ENCODE measurements at regions of chr20 and their contacts with region 1.

Region 1: DNA sequence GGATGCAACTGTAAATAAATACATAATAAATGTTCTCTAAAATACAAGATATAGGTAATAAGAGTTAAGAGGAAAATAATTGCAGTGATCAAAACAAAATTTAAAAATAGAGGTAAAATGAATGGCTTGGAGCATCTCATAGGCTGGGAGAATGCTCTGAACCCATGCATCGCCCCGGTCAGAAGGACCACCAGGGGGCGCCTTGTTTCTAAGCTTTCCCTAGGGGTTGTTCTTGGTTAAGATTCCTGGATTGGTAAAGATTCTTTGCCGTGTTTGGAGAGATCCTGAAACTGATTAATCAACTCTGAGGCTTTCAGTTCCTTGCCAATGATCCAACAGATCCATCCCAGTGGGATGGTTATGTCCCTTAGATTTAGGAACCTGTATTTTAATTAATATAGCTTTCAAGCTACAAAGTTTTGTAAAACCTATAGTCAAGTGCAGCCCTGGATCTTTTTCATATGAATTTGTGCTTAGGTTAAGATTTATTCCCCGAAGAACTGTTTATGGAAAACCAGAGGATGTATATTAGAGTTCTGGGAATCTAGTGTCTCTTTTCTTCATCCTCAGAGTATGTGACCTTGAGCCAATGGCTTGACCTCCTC is 45.3 kb upstream of the PRELID3B start:
- H3K4me3 ChIP-seq: no peak overlapping the region
- H3K27ac ChIP-seq: no peak overlapping the region
- H3K4me1 ChIP-seq: no peaks in the 10 kb centered on the region
- CTCF ChIP-seq: peak; percentile 32; the same call in 1 of the 2 replicates

Region 2: GRCh38 chr20:59071216-59071615 is 16.7 kb before region 1 on chr20:
- CTCF ChIA-PET with region 1: interaction called, 14 read pairs
- POLR2A ChIA-PET with region 1: no interaction called
- H3K4me3 ChIP-seq: no peak overlapping the region
- H3K27ac ChIP-seq: no peak overlapping the region
- H3K4me1 ChIP-seq: no peaks in the 10 kb centered on the region
- CTCF ChIP-seq: no peak

Region 3: GRCh38 chr20:59102841-59103299 is 14.9 kb after region 1 on chr20:
- CTCF ChIA-PET with region 1: interaction called, 20 read pairs
- POLR2A ChIA-PET with region 1: no interaction called
- H3K4me3 ChIP-seq: no peak overlapping the region
- H3K27ac ChIP-seq: no peak overlapping the region
- H3K4me1 ChIP-seq: no peaks in the 10 kb centered on the region
- CTCF ChIP-seq: no peak

Region 4: DNA sequence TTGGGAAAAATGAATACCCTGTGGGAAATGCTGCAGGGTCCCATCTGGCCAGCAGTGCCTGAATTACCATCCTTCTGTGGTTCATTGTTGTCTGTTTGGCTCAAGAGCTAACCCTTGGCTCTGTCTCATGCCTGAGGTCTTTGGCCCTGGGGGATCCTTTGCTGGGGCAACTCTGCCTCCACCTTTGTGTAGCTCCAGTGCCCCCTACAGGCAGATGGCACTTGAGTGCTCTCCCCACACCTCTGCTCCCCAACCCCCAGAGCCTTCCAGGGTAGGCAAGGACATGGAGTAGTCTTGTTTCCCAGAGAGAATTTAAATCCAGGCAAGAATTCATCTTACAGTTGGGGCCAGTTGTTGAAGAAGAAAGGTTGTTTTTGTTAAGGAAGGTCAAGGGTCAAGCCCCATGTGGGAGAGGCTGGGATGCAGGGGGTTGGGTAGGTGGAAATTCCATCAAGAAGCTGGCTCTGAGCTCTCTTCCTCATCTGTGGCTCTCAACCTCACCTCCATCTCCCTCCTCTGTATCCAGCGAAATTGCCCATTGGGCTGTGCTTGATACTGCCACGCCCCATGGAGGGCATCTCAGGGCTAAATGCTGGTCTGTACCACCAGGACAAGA is 119.9 kb after region 1 on chr20:
- CTCF ChIA-PET with region 1: interaction called, 29 read pairs
- POLR2A ChIA-PET with region 1: no interaction called
- H3K4me3 ChIP-seq: no peak overlapping the region
- H3K27ac ChIP-seq: no peak overlapping the region
- H3K4me1 ChIP-seq: no peaks in the 10 kb centered on the region
- CTCF ChIP-seq: no peak

Region 5: GRCh38 chr20:59222253-59223181 is 134.6 kb after region 1 on chr20:
- CTCF ChIA-PET with region 1: interaction called, 16 read pairs
- POLR2A ChIA-PET with region 1: no interaction called
- H3K4me3 ChIP-seq: peak overlapping the region; percentile 35
- H3K27ac ChIP-seq: peak overlapping the region; percentile 24; the same call in 1 of the 2 replicates
- H3K4me1 ChIP-seq: no peaks in the 10 kb centered on the region
- CTCF ChIP-seq: peak; percentile 65; the same call in 1 of the 2 replicates

Region 6: GRCh38 chr20:59403261-59403961 is 315.5 kb after region 1 on chr20:
- CTCF ChIA-PET with region 1: interaction called, 16 read pairs
- POLR2A ChIA-PET with region 1: no interaction called
- H3K4me3 ChIP-seq: peak overlapping the region; percentile 6; the same call in 1 of the 2 replicates
- H3K27ac ChIP-seq: no peak overlapping the region
- H3K4me1 ChIP-seq: no peaks in the 10 kb centered on the region; the same call in 1 of the 2 replicates
- CTCF ChIP-seq: peak; percentile 91

Measured in HEK293 (cell line).